Left ventricle myocardium superior (tissue), 1 donor: ENCODE measurements at regions of chr22 and their contacts with region 1.

Region 1: DNA sequence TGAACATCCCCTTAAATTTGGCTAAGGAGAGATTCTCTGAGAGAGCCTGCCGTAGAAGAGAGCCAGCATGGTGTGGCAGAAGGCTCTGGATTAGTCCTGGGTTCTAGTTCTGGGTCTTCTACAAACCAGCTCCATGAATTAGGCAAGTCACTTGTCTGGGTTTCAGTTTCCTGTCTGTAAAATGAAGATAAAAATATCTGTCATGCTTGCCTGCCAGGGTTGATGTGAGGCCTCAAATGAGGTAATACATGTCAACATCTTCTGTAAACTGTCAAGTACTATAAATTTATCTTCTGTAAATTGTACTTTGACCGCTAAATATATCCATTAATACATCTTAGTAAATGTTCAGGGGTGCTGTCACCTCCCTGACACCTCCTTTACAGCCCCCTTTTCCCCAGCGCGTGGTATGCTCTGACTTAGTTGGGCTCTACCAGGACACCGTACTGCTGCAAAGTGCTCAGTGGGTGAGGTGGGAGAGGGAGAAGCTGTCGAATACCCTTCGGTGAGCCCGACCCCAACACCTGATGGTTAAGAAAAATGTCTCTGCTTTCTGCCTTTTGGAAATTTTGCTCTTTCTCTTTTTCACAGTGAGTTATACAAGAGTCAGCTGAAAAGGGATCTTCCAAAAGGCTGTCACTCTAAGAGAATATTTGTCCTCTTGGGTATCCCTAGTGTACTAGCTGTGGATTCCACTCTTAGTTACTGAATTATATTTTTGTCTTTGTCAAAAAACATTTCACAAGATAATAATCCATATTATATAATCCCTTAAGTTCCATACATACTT is 15.0 kb downstream of the RBX1 start:
- DNase-seq: no peak
- ATAC-seq: peak; percentile 72

Region 2: DNA sequence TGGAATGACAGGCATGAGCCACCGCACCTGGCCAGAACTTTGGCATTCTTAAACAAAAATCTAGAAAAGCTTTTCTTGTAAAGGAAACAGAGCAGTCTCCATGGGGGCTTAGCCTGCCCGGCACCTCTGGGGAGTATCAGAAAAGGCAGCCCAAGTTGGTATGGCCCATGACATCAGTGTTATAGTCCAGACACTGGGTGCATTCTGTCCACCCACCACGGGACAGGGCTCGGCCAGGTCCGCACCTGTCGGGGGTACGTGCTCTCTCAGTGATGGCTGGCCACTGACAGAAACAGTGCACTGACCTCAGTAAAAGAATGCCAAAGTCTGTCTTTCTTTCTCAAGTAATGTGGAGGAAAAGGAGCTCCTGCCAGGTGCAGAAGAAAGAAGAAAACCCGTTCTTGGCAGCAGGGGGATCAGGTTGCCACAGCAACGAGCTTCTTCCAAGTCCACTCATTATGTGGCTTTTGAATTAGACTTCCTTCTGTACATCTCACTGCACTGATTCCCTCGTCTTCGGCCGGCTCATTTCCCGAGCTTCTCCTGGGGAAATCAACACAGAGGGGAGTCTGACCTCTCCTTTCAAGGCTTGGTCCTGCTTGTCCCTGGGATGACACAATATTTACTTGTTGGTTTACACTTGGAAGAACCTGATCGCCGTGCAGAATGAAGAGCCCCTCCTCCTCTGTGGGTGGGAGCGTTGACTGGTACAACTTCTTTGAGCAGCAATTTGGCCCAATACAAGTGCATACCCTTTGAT is 251.8 kb before region 1 on chr22:
- intact Hi-C with region 1: no loop called
- DNase-seq: no peak
- ATAC-seq: no peak

Region 3: GRCh38 chr22:40856513-40857308 is 109.4 kb before region 1 on chr22 and contains the starts of genes ST13 and XPNPEP3:
- intact Hi-C with region 1: no loop called
- DNase-seq: peak; percentile 98
- ATAC-seq: peak; percentile 98
- total RNA-seq, gene ST13: 222 TPM
- total RNA-seq, gene XPNPEP3: 25.7 TPM

Region 4: GRCh38 chr22:41009202-41009943 is 43.2 kb after region 1 on chr22:
- intact Hi-C with region 1: loop called (anchors 2 kb)
- DNase-seq: no peak
- ATAC-seq: no peak

Region 5: DNA sequence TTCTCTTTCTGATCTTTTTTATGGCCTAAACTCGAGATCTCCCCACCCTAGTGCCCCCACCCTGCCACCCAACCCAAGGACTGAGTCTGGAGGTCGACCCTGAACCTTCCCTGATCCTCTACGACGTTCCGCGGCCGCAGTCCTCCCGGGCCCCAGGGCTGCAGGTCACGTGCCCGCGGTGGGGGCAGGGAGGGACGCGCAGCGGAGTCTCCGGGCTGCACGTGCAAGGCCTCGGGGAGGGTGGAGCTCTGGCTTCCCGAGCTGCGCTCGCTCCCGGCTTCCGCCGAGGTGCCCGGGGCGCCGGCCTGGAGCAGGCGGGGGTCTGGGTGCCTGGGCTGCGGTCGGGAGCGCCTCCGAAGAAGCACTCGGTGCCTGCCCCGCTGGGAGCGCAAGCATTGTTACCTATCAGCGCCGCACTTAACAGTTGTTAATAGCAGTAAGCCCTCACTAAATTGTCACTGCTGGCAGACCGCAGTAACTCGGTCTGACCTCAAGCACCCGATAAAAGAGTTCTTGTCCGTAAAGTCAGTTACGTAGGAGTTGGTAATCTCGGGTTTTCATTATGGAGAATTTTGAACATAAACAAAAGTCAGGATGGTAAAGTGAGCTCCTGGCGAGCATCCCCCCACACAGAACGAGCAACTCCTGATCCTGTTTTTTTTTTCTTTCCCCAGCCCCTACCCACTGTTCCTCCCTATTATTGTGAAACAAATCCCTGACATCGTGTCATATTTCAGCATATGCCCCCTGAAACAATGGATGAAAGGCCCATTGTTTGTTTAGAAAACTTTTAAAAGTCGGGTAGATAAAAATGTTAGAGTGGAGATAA is 56.6 kb after region 1 on chr22:
- intact Hi-C with region 1: no loop called
- DNase-seq: peak; percentile 97
- ATAC-seq: peak; percentile 95

Region 6: GRCh38 chr22:41596776-41597634 is 630.9 kb after region 1 on chr22:
- intact Hi-C with region 1: no loop called
- DNase-seq: peak; percentile 76
- ATAC-seq: peak; percentile 91